ENCODE measurements at regions of chr3 and their contacts with region 1.

Region 1: GRCh38 chr3:128133273-128134084 is 9.9 kb upstream of the RUVBL1 start:
- DNase-seq: peak; percentile 56
- H3K4me3 Mint-ChIP-seq: no peak overlapping the region
- H3K27ac Mint-ChIP-seq: no peak overlapping the region
- H3K4me1 Mint-ChIP-seq: no peaks in the 10 kb centered on the region
- H3K27me3 Mint-ChIP-seq: peaks cover 1% of the 10 kb centered on the region

Region 2: DNA sequence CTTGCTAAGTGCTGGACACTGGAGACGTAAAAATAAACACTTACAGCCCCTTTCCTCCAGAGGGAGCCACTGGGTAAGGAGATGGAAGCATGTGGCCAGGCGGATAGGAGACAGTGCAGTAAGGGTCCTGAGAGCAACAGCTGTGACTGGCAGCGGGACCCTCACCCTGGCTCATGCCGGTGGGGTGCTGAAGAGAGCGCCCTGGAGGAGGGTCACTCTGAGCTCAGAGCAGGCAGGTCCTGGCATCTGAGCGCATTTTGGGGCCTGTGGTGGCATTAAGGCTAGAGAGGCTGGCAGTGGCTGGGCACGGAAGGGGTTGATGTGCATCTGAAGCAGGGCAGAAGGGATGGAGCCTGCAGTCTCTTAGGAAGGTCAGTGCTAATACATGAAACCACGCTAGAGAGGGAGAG is 65.3 kb before region 1 on chr3:
- CTCF ChIA-PET with region 1: interaction called, 19 read pairs
- POLR2A ChIA-PET with region 1: interaction called, 3 read pairs
- intact Hi-C with region 1: no loop called
- DNase-seq: no peak
- H3K4me3 Mint-ChIP-seq: no peak overlapping the region
- H3K27ac Mint-ChIP-seq: no peak overlapping the region
- H3K4me1 Mint-ChIP-seq: no peaks in the 10 kb centered on the region
- H3K27me3 Mint-ChIP-seq: no peaks in the 10 kb centered on the region

Region 3: GRCh38 chr3:128095222-128095703 is 38.2 kb before region 1 on chr3:
- CTCF ChIA-PET with region 1: interaction called, 97 read pairs
- POLR2A ChIA-PET with region 1: no interaction called
- intact Hi-C with region 1: loop called (anchors 1 kb)
- DNase-seq: peak; percentile 84
- H3K4me3 Mint-ChIP-seq: no peak overlapping the region
- H3K27ac Mint-ChIP-seq: no peak overlapping the region
- H3K4me1 Mint-ChIP-seq: peaks cover 4% of the 10 kb centered on the region
- H3K27me3 Mint-ChIP-seq: no peaks in the 10 kb centered on the region

Region 4: DNA sequence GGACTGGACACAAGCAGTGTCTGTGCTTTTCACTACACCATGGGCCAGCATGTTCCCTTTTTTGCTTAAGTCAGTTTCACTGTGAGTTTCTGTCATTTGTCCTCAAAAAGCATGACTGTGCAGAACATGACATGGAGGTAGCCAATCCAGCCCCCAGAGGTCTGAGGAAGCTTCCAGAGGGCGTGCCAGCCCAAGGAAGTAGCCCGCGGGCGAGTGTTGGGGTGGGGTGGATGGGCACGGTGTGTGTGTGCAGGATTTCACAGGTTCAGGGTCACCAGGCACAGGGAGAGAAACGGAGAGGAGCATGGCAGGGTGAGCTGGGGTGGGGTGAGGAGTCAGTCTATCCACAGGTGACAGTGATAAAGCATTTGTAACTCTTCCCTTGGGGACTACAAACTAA is 11.9 kb after region 1 on chr3:
- CTCF ChIA-PET with region 1: interaction called, 13 read pairs
- POLR2A ChIA-PET with region 1: no interaction called
- intact Hi-C with region 1: no loop called
- DNase-seq: no peak
- H3K4me3 Mint-ChIP-seq: no peak overlapping the region
- H3K27ac Mint-ChIP-seq: no peak overlapping the region
- H3K4me1 Mint-ChIP-seq: no peaks in the 10 kb centered on the region
- H3K27me3 Mint-ChIP-seq: no peaks in the 10 kb centered on the region

Region 5: GRCh38 chr3:128170805-128171516 is 37.5 kb after region 1 on chr3:
- CTCF ChIA-PET with region 1: no interaction called
- POLR2A ChIA-PET with region 1: no interaction called
- intact Hi-C with region 1: no loop called
- DNase-seq: peak; percentile 21
- H3K4me3 Mint-ChIP-seq: no peak overlapping the region
- H3K27ac Mint-ChIP-seq: no peak overlapping the region
- H3K4me1 Mint-ChIP-seq: peaks cover 13% of the 10 kb centered on the region
- H3K27me3 Mint-ChIP-seq: no peaks in the 10 kb centered on the region

Region 6: GRCh38 chr3:128266453-128266852 is 133.0 kb after region 1 on chr3:
- CTCF ChIA-PET with region 1: no interaction called
- POLR2A ChIA-PET with region 1: no interaction called
- intact Hi-C with region 1: no loop called
- DNase-seq: no peak
- H3K4me3 Mint-ChIP-seq: no peak overlapping the region
- H3K27ac Mint-ChIP-seq: no peak overlapping the region
- H3K4me1 Mint-ChIP-seq: no peaks in the 10 kb centered on the region
- H3K27me3 Mint-ChIP-seq: no peaks in the 10 kb centered on the region

Measured in activated CD4-positive, alpha-beta memory T cell treated with anti-CD3 and anti-CD28 coated beads for 36 hours (primary cell).